IMR-90 (cell line): ENCODE measurements at regions of chr4 and their contacts with region 1.

Region 1: GRCh38 chr4:98612318-98613250 is 45.8 kb downstream of the TSPAN5 start:
- DNase-seq: no peak
- ATAC-seq: peak; percentile 24; the same call in 1 of the 2 replicates
- H3K4me3 ChIP-seq: no peak overlapping the region
- H3K27ac ChIP-seq: no peak overlapping the region
- H3K4me1 ChIP-seq: peaks cover 26% of the 10 kb centered on the region
- H3K27me3 ChIP-seq: no peaks in the 10 kb centered on the region
- CTCF ChIP-seq: no peak
- POLR2A ChIP-seq: no peak
- RAD21 ChIP-seq: no peak

Region 2: GRCh38 chr4:98474408-98474844 is 138.2 kb before region 1 on chr4:
- CTCF ChIA-PET with region 1: no interaction called
- POLR2A ChIA-PET with region 1: no interaction called
- dilution Hi-C with region 1: no loop called
- in situ Hi-C with region 1: no loop called
- intact Hi-C with region 1: no loop called
- DNase-seq: peak; percentile 85
- ATAC-seq: peak; percentile 85
- H3K4me3 ChIP-seq: no peak overlapping the region
- H3K27ac ChIP-seq: peak overlapping the region; percentile 70; the same call in 1 of the 2 replicates
- H3K4me1 ChIP-seq: peaks cover 6% of the 10 kb centered on the region
- H3K27me3 ChIP-seq: no peaks in the 10 kb centered on the region
- CTCF ChIP-seq: no peak
- POLR2A ChIP-seq: no peak
- RAD21 ChIP-seq: no peak

Region 3: DNA sequence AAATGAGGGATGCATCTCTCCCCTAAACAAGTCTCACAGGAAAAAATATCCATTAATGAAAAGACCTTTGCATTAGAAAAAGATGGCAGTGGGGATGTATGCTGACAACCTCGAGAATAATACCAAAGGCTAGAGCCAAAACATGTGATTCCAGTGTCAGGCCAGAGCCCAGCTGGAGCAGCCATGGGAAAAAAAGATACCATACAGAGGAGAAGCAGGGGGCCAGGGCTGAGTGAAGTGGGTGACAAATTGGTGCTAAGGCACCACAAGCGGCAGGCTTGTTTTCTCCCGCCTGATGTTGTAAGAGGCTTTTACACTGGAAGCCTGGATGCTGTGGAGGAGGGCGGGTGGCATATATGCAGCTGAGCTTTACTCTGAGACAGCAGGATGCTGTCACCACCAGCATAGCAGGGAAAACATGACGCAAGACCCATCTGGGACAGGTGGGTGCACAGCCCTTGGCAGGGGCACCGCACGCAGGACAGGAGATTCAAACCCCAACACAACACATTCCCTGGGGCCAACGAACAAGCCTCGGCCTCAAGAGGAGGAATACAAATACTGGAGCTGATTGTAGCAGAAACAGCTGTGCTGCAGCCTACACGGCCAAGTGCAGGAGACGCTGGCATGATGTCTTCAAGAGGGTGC is 46.1 kb before region 1 on chr4:
- CTCF ChIA-PET with region 1: no interaction called
- POLR2A ChIA-PET with region 1: no interaction called
- dilution Hi-C with region 1: no loop called
- in situ Hi-C with region 1: no loop called
- intact Hi-C with region 1: loop called (anchors 5 kb)
- DNase-seq: peak; percentile 50
- ATAC-seq: peak; percentile 51
- H3K4me3 ChIP-seq: no peak overlapping the region
- H3K27ac ChIP-seq: no peak overlapping the region
- H3K4me1 ChIP-seq: peaks cover 11% of the 10 kb centered on the region
- H3K27me3 ChIP-seq: no peaks in the 10 kb centered on the region
- CTCF ChIP-seq: no peak
- POLR2A ChIP-seq: no peak
- RAD21 ChIP-seq: no peak

Region 4: GRCh38 chr4:99190336-99190735 is 577.8 kb after region 1 on chr4:
- CTCF ChIA-PET with region 1: no interaction called
- POLR2A ChIA-PET with region 1: no interaction called
- dilution Hi-C with region 1: no loop called
- in situ Hi-C with region 1: no loop called
- intact Hi-C with region 1: no loop called
- DNase-seq: no peak
- ATAC-seq: no peak
- H3K4me3 ChIP-seq: no peak overlapping the region
- H3K27ac ChIP-seq: no peak overlapping the region
- H3K4me1 ChIP-seq: no peaks in the 10 kb centered on the region
- H3K27me3 ChIP-seq: no peaks in the 10 kb centered on the region
- CTCF ChIP-seq: no peak
- POLR2A ChIP-seq: no peak
- RAD21 ChIP-seq: no peak